ENCODE measurements at regions of chr11 and their contacts with region 1.

Region 1: DNA sequence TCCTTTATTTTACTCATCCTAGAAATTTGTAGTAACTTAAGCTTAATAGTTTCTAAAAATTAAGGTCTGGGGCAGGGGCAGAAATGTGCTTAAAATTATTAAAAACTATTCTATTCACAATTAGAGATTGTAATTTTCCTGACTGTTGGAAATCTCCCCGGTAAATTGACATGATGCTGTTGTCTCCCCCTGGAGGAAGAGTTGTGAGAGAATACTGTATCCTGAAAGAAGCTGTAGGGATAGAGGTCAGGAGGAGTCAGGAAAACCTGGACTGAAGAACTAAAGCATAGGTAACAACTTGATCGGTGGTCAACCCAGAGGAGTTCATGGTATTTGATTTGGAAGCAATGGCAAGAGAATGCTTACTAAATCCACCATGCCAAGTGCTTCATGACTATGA is 16.2 kb upstream of the ESAM start:
- DNase-seq: no peak
- H3K4me3 ChIP-seq: no peak overlapping the region
- CTCF ChIP-seq: peak; percentile 4

Region 2: DNA sequence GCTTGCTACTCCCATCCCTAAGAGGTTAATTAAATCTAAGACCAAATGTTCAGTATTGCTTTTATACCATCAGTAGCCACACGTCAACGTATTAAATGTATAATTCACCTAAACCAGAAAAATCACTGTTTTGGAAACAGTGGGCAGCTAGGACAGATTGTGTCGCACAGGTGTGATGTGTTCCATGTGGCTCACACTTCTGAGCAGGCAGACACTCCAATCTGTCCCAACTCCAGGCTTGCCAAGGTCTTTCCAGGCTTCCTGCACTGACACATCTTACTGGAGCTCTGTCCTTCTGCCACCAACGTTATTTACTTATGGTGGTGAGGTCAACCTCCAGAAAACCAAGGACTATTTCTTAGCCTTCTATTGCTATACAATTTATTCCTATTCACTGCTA is 116.2 kb before region 1 on chr11:
- in situ Hi-C with region 1: loop called (anchors 5 kb)
- DNase-seq: no peak
- H3K4me3 ChIP-seq: no peak overlapping the region
- CTCF ChIP-seq: no peak

Region 3: GRCh38 chr11:124724979-124725718 is 53.1 kb before region 1 on chr11:
- in situ Hi-C with region 1: no loop called
- DNase-seq: no peak
- H3K4me3 ChIP-seq: no peak overlapping the region
- CTCF ChIP-seq: no peak

Measured in astrocyte of the cerebellum (primary cell).